GM18951 (cell line): ENCODE measurements at regions of chr5 and their contacts with region 1.

Region 1: GRCh38 chr5:148179234-148179824 is 11.0 kb downstream of the SPINK14 start:
- POLR2A ChIP-seq: no peak

Region 2: DNA sequence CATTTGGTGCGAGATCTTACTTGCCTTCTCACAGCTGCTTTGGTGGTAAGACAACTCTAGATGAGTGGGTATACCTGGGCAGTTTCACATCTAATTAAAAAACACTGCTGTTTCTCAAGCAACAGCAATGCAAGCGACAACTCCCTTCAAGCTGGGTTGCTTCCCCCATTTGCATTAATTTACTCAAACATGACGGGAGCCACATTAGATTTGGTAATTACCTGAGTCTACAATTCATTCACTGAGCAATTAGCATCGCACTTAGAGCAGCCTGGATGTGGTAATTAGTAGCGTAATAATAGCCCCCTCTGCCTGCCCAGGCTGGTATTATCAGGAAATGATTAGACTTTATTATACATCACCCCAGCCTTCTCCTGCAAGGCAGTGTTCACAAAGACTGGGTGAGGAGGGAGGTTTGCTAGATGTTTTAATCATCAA is 277.9 kb after region 1 on chr5:
- in situ Hi-C with region 1: loop called (anchors 25 kb)
- POLR2A ChIP-seq: no peak

Region 3: GRCh38 chr5:148708854-148709253 is 529.5 kb after region 1 on chr5:
- in situ Hi-C with region 1: loop called (anchors 25 kb)
- POLR2A ChIP-seq: no peak

Region 4: GRCh38 chr5:148849461-148849860 is 670.1 kb after region 1 on chr5:
- in situ Hi-C with region 1: no loop called
- POLR2A ChIP-seq: no peak